ENCODE measurements at regions of chr10 and their contacts with region 1.

Region 1: GRCh38 chr10:71771821-71772617 is 1.3 kb downstream of the VSIR start:
- DNase-seq: peak; percentile 40 to 57
- ATAC-seq: peak; percentile 2 to 10; a peak in 3 of 6 replicates
- H3K4me3 ChIP-seq: peak overlapping the region; percentile 64; the same call in 2 of the 3 replicates
- H3K27ac ChIP-seq: peak overlapping the region; percentile 79 to 98
- H3K4me1 ChIP-seq: peaks cover 62% of the 10 kb centered on the region
- CTCF ChIP-seq: no peak
- EP300 ChIP-seq: no peak
- POLR2A ChIP-seq: no peak
- RAD21 ChIP-seq: no peak

Region 2: DNA sequence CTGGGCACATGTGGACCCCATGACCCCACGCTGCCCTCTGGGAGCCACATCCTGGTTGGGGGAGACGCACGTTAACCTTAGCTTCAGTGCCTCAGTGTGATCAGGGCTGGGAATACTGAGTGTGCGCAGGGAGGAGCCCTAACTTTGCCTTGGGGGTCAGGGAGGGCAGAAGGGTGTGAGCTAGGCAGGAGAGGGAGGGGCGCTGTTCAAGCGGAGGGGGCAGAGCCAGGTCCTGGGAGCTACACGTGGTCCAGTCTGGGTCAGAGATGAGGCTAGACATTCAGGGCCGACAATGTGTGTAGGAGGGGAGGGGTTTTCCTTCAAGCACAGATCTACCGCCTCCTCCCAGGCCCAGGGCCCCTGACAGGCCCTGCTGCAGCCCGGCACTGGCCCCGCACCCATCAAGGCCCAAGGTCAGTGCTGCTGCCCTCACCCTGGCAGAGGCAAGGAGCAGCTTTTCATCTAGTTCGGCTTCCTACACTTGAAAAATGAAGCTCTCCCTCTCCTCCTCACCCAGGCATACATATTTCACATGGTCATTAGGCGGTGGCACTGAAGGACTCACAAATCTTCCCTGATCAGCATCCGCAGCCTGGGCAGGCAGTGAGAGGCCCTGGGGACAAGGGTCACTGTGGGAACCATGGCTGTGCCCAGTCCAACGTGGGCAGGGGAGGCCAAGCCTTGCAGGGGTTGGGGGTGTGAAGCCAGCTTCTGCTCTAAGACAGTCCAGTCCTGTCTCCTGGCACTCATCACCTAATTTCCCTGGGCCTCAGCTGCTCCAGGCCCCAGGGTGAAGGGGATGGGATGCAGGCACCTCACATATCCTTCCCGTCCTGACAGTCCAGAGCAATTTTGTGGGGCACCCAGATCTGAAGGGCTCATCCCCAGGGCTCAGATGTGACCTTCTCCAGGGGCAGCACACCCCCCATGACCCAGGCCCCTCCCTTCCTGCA is 99.7 kb before region 1 on chr10:
- CTCF ChIA-PET with region 1: no interaction called
- POLR2A ChIA-PET with region 1: no interaction called
- DNase-seq: no peak
- ATAC-seq: peak; percentile 22 to 29; a peak in 3 of 6 replicates
- H3K4me3 ChIP-seq: no peak overlapping the region
- H3K27ac ChIP-seq: no peak overlapping the region
- H3K4me1 ChIP-seq: no peaks in the 10 kb centered on the region
- CTCF ChIP-seq: no peak
- EP300 ChIP-seq: no peak
- POLR2A ChIP-seq: no peak
- RAD21 ChIP-seq: no peak

Region 3: DNA sequence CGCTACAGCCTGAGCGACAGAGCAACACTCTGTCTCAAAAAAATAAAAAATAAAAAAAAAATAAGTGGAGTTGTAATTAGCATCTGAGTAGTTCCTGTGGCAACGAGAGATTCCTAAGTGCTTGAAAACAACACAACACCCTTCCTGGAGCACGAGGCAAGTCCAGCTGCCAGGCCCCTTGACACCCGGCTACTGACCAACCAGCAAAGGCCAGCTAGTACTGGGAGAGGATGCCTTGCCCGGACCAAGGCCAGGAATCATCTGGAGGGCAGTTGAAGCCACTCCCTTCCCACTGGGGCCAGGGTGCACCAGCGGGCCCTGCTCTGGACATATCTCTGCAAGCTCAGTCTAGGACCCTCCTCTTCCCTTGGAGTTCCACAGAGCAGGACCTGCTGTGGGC is 53.0 kb before region 1 on chr10:
- CTCF ChIA-PET with region 1: interaction called, 31 read pairs
- POLR2A ChIA-PET with region 1: interaction called, 3 read pairs
- DNase-seq: no peak
- ATAC-seq: no peak
- H3K4me3 ChIP-seq: no peak overlapping the region
- H3K27ac ChIP-seq: no peak overlapping the region
- H3K4me1 ChIP-seq: peaks cover 3% of the 10 kb centered on the region
- CTCF ChIP-seq: no peak
- EP300 ChIP-seq: no peak
- POLR2A ChIP-seq: no peak
- RAD21 ChIP-seq: no peak

Region 4: DNA sequence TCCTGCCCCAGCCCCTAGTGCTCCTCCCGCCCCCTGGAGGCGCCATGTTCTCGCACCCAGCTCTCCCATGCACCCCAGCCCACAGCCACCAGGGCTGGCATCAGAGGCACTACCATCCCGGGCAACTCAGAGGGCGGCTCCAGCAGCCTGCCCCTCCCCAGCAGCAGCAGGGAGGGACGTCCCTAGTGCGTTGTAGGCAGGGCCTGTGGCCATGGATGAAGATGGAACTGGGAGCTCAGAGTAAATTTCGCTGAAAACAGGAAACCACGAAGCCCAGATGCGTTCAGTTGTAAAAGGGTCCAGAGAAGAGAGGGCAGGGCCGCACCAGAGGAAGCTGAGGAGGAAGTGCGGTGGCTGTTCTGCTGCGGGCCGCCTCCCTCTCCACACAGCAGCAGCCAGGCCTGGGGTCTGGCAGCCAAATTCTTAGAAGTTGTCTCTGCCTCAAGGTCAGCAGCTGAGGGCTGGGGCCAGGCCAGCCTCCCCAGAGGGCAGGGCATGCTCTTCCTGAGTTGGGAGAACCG is 23.3 kb before region 1 on chr10:
- CTCF ChIA-PET with region 1: interaction called, 19 read pairs
- POLR2A ChIA-PET with region 1: interaction called, 4 read pairs
- DNase-seq: no peak
- ATAC-seq: peak in 1 of 2 experiments; percentile 8; a peak in 2 of 6 replicates
- H3K4me3 ChIP-seq: no peak overlapping the region
- H3K27ac ChIP-seq: no peak overlapping the region
- H3K4me1 ChIP-seq: peaks cover 13% of the 10 kb centered on the region
- CTCF ChIP-seq: no peak
- EP300 ChIP-seq: no peak
- POLR2A ChIP-seq: no peak
- RAD21 ChIP-seq: no peak

Region 5: DNA sequence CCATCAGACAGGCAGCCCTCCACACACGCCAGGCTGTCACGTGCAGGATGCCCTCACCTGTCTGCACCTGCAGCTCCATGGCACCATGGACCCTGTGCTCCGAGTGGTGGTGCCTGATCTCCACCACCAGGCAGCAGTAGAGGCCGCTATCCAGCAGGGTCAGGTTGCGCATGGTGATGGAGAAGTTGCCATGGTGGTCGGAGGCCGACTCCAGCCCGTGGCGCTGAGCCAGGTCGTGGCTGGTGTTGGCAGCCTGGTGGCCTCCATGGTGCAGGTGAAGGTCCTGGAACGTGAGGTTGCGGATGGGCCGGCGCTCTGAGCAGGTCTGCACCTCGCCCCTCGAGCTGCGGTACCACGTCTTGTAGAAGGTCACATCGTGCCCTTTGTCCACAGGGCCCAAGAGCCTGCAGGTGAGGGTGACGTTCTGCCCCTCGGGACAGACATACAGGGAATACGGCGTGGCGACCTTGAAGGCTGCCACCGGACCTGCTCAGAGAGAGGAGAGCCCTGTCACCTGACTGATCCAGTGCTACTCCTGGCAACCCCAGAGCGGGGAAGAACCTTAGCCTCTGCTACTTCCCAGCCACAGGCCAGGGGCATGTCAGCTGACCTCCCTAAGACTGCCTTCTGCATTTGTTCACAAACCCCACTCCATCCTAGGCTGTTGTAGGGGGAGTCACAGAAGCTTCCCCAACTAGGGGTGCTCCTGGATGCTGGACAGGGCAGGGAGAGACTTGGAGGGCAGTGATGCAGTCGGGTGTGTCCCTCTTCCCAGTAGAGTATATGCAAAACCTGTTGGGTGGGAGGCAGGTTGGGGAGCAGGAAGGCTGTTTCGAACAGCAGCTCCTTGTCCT is 10.3 kb before region 1 on chr10:
- CTCF ChIA-PET with region 1: interaction called, 41 read pairs
- POLR2A ChIA-PET with region 1: interaction called, 4 read pairs
- DNase-seq: no peak
- ATAC-seq: 0 out of 6 replicates have a peak, but pooled peaks of 1 of the 2 experiments have one; percentile 17
- H3K4me3 ChIP-seq: no peak overlapping the region
- H3K27ac ChIP-seq: peak overlapping the region; percentile 2 to 98; a peak in 3 of 6 replicates
- H3K4me1 ChIP-seq: peaks cover 64% of the 10 kb centered on the region
- CTCF ChIP-seq: no peak
- EP300 ChIP-seq: no peak
- POLR2A ChIP-seq: no peak
- RAD21 ChIP-seq: 0 out of 5 replicates have a peak, but pooled peaks of 1 of the 2 experiments have one; percentile 14

Region 6: DNA sequence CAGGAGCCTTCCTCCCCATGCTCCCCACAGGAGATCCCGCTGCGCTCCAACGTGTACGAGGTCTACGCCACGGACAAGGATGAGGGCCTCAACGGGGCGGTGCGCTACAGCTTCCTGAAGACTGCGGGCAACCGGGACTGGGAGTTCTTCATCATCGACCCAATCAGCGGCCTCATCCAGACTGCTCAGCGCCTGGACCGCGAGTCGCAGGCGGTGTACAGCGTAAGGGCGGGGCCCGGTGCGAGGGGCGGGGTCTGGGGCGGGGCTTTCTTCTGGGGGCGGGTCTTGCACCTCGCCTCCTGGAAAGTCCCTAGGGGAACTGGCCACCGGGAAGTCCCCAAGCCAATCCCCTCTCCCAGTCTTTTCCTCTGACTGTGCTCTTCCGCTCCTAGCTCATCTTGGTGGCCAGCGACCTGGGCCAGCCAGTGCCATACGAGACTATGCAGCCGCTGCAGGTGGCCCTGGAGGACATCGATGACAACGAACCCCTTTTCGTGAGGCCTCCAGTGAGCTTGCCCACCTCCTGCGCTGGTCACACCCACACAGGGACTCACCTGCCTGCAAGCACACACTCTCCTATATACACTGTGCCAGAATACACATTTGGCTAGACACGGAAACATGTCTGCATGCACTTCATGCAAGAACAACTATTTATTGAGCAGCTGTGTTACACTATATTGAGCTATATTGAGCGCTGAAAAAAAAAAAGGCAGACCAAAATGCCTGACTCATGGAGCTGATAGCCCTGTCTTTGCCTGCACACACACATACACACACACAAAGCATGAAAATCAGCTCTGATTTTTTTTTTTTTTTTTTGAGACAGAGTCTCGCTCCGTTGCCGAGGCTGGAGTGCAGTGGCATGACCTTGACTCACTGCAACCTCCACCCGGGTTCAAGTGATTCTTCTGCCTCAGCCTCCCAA is 34.0 kb after region 1 on chr10:
- CTCF ChIA-PET with region 1: interaction called, 22 read pairs
- POLR2A ChIA-PET with region 1: interaction called, 3 read pairs
- DNase-seq: peak in 1 of 2 experiments; percentile 22
- ATAC-seq: peak; percentile 5 to 27; a peak in 5 of 6 replicates
- H3K4me3 ChIP-seq: no peak overlapping the region
- H3K27ac ChIP-seq: no peak overlapping the region
- H3K4me1 ChIP-seq: no peaks in the 10 kb centered on the region
- CTCF ChIP-seq: no peak
- EP300 ChIP-seq: no peak
- POLR2A ChIP-seq: no peak
- RAD21 ChIP-seq: no peak

Region 7: DNA sequence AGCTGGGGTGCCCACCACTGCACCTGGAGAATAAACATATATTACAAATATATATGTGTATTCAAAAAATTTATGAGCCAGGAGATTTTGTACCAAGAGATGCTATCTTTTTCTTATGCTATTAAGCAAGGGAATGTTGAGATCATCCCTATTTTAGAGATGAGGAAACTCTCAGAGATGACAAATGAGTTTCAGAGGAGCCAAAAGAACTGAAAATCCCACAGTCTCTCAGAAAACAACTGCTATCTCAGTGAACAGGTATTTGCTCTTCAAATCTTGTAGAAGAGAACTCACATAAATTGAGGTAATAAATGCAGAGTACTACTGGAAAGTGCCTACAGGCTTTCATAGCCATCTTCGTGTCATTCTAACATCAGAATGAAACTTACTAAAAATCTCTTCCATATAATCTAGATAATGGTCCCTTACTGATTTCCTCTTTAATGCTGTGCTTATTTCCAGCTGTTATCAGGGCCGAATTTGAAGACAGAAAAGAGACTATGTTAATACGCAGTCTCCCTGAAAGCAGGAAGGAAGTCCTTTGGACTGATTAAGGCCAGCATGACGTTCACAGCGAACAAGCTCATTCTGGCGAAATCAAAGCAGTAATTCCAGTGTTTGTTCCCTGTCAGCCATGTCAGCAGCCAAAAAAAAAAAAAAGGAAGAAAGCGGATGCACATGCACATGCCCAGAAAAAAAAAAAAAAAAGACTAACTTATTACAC is 414.4 kb after region 1 on chr10:
- CTCF ChIA-PET with region 1: no interaction called
- POLR2A ChIA-PET with region 1: no interaction called
- DNase-seq: no peak
- ATAC-seq: no peak
- H3K4me3 ChIP-seq: no peak overlapping the region
- H3K27ac ChIP-seq: peak overlapping the region in 1 of 2 experiments; percentile 42; a peak in 1 of 6 replicates
- H3K4me1 ChIP-seq: 0 out of 3 replicates have a peak, but pooled peaks cover 7% of the 10 kb centered on the region
- CTCF ChIP-seq: no peak
- EP300 ChIP-seq: no peak
- POLR2A ChIP-seq: no peak
- RAD21 ChIP-seq: no peak